WTC11 (cell line): ENCODE measurements at regions of chr1 and their contacts with region 1.

Region 1: GRCh38 chr1:25392841-25393240 is 27.8 kb downstream of the RHCE start:
- DNase-seq: no peak
- ATAC-seq: no peak
- H3K4me3 Mint-ChIP-seq: no peak overlapping the region
- H3K27ac Mint-ChIP-seq: no peak overlapping the region
- H3K4me1 Mint-ChIP-seq: peaks cover 4% of the 10 kb centered on the region; the same call in 1 of the 2 replicates
- H3K27me3 Mint-ChIP-seq: no peaks in the 10 kb centered on the region; the same call in 1 of the 2 replicates
- CTCF ChIP-seq: no peak

Region 2: DNA sequence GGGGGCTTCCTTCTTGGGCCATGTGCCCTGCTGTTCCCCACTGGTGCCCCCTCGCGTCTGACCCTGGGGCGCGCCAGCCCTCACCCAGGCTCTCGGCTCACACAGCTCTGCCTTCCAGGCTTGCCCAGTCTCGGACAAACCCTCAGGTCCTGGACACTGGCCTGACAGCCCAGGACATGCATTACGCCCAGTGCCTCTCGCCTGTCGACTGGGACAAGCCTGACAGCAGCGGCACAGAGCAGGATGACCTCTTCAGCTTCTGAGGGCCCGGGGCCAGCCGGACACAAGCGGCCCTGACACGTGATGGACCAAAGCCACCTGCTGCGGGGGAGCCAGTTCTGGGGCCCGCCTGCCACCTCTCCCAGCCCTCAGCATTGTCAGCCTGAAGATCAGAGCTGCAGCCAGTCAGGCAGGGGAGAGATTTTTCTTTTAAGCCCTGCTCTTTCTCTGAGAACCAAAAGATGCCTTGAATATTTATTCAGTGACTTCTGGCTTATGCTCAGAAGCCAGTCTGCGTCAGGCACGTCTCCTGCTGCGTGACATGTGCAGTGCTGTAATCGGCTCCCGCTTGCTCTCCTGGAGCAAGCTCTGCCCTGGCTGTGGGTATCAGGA is 174.0 kb after region 1 on chr1:
- CTCF ChIA-PET with region 1: interaction called, 10 read pairs
- POLR2A ChIA-PET with region 1: no interaction called
- DNase-seq: peak; percentile 32
- ATAC-seq: peak; percentile 23; the same call in 1 of the 2 replicates
- H3K4me3 Mint-ChIP-seq: no peak overlapping the region
- H3K27ac Mint-ChIP-seq: peak overlapping the region; percentile 76; the same call in 1 of the 2 replicates
- H3K4me1 Mint-ChIP-seq: peaks cover 48% of the 10 kb centered on the region
- H3K27me3 Mint-ChIP-seq: no peaks in the 10 kb centered on the region
- CTCF ChIP-seq: no peak